ENCODE measurements at regions of chr20 and their contacts with region 1.

Region 1: DNA sequence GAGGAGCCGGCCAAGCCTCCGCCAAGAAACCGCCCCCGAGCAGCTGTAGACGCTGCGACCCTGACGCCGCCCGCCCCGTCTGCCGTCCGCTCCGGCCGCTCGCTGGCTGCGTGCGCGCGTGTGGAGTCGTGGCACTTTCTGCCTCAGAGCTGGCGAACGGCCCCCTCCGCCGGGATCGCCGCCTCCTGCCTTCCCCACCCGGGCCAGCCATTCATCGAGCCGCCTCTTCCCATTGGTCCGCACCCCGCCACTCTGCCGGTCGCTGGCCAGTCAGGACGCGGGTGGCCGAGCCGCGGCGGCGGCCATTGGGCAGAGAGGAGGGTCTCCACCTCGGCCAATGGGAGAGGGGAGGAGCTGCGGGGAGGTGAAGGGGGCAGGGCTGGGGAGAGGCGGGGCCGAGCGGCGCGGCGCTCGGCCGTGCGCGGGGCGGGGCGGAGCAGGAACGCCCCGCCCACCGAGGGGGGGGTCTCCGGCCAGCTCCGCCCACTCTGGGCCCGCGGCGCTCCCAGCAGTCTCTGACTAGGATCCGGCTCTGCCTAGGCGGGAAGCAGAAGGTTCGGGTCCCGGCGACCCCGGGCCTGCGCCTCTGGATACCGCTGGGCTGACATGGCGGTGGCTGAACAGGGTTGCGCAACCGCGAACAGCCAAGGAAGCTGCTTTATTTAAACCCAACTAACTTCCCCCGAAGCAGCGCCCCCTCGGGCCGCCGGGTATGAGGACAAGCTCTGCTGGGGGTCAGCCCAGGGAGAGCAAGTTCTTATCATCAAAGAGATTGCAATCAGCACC is at the start of gene RRBP1:
- DNase-seq: peak; percentile 99
- H3K4me3 ChIP-seq: peak within 1 kb of the TSS; percentile 78 to 88 (median 85)
- H3K27ac ChIP-seq: peak within 1 kb of the TSS; percentile 67
- H3K4me1 ChIP-seq: peaks cover 11% of the 10 kb centered on the region
- H3K27me3 ChIP-seq: no peaks in the 10 kb centered on the region
- CTCF ChIP-seq: peak; percentile 45 to 68
- total RNA-seq, gene RRBP1: 85.2 to 230 TPM

Region 2: DNA sequence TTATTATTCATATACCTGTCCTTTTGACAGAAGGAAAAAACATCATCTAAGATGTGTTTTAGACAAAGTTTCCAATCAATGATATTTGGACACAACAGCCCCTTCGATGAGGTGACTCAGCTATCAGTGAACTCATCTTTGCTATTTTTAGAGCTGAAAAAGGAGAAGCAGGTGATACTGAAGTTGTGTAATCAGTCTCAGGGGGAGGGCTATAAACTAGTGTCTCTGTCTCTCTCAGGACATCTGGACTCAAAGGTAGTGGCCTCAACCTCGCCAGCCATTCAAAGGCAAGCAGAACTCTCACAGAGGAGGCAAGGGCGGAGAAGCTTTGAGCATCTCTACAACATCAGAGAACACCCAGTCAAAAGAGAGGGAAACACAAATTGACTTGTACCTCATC is 286.6 kb before region 1 on chr20:
- CTCF ChIA-PET with region 1: no interaction called
- dilution Hi-C with region 1: no loop called
- in situ Hi-C with region 1: no loop called
- intact Hi-C with region 1: no loop called
- DNase-seq: no peak
- H3K4me3 ChIP-seq: no peak overlapping the region
- H3K27ac ChIP-seq: no peak overlapping the region
- H3K4me1 ChIP-seq: no peaks in the 10 kb centered on the region
- H3K27me3 ChIP-seq: no peaks in the 10 kb centered on the region
- CTCF ChIP-seq: no peak

Region 3: DNA sequence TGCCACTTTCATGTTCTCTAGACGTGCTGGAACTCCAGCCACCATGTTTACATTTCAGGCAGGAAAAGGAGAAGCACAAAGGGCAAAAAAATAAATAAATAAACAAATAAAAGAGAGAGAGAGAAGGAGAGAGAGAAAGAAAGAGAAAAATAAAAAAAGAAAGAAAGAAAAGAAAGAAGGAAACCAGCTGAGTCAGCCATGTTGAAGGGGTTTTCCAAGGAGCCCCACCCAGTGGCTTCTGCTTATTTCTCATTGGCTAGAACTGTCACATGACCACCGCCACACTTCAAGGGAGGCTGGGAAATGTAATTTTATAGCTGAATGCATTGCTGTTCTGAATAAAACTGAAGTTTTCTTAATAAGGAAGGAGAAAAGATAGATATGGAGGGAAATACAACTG is 222.2 kb before region 1 on chr20:
- CTCF ChIA-PET with region 1: no interaction called
- dilution Hi-C with region 1: no loop called
- in situ Hi-C with region 1: no loop called
- intact Hi-C with region 1: no loop called
- DNase-seq: no peak
- H3K4me3 ChIP-seq: no peak overlapping the region
- H3K27ac ChIP-seq: no peak overlapping the region
- H3K4me1 ChIP-seq: no peaks in the 10 kb centered on the region
- H3K27me3 ChIP-seq: no peaks in the 10 kb centered on the region
- CTCF ChIP-seq: no peak

Region 4: GRCh38 chr20:17741220-17741619 is 58.9 kb after region 1 on chr20:
- CTCF ChIA-PET with region 1: no interaction called
- dilution Hi-C with region 1: no loop called
- in situ Hi-C with region 1: no loop called
- intact Hi-C with region 1: no loop called
- DNase-seq: no peak
- H3K4me3 ChIP-seq: no peak overlapping the region
- H3K27ac ChIP-seq: no peak overlapping the region
- H3K4me1 ChIP-seq: no peaks in the 10 kb centered on the region
- H3K27me3 ChIP-seq: no peaks in the 10 kb centered on the region
- CTCF ChIP-seq: no peak

Region 5: DNA sequence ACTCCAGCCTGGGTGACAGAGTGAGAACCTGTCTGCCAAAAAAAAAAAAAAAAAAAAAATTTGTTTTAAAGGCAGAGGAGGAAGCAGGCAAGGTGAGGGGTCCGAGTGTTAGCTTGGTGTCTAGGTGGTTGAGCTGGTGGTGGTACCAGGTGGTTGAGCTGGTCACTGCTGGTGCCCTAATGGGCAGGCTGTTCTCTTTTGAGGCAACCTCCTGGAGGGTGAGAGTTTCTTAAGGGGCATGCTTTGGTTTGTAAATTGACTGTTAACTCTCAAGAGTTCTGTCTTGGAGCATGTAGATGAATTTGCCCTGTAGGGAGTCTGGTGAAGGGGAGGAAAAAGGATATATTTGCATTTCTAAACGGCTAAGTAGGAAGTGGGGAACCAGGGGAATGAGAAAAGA is 70.2 kb after region 1 on chr20:
- CTCF ChIA-PET with region 1: interaction called, 49 read pairs
- dilution Hi-C with region 1: no loop called
- in situ Hi-C with region 1: no loop called
- intact Hi-C with region 1: no loop called
- DNase-seq: no peak
- H3K4me3 ChIP-seq: no peak overlapping the region
- H3K27ac ChIP-seq: no peak overlapping the region
- H3K4me1 ChIP-seq: peaks cover 4% of the 10 kb centered on the region
- H3K27me3 ChIP-seq: no peaks in the 10 kb centered on the region
- CTCF ChIP-seq: no peak

Region 6: DNA sequence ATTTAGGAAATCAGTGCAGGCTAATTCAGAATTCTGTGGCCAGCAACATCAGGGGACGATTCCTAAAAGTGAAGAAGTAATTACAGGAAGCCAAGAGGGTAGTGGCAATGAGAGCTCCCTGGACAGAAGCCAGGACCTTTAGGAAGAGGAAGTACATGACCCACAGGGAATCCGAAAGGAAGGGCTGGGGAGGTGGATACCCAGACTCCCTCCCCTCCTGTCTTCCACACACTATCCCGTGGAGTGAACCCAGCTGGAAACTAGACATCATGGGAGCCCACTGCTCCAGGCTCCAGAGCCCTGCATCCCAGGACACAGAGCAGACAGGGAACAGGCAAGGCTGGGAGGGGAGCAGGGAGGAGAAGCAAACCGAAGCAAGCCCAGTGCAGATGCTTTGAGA is 203.2 kb after region 1 on chr20:
- CTCF ChIA-PET with region 1: no interaction called
- dilution Hi-C with region 1: loop called (anchors 5 kb)
- in situ Hi-C with region 1: loop called in 1 of 2 experiments (anchors 25 kb)
- intact Hi-C with region 1: loop called (anchors 2 kb)
- DNase-seq: no peak
- H3K4me3 ChIP-seq: no peak overlapping the region
- H3K27ac ChIP-seq: no peak overlapping the region
- H3K4me1 ChIP-seq: peaks cover 31% of the 10 kb centered on the region
- H3K27me3 ChIP-seq: no peaks in the 10 kb centered on the region
- CTCF ChIP-seq: no peak

Region 7: DNA sequence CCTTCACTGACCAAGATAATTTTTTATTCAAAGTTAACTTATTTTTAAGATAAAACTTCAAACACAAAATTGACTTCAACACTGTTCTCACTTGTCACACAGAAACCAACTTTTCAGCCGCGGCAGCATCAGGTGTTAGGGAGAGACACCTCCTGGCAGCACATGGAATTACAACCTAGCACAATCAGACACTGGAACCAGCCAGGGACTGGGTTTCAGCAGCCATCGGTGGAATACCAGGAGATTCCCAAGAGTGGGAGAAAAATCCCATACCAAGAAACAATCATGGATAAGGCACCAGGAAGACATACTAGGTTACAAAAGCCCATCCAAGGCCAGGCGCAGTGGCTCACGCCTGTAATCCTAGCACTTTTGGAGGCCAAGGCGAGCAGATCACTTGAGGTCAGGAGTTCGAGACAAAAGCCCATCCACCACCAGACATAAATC is 216.3 kb after region 1 on chr20:
- CTCF ChIA-PET with region 1: interaction called, 4 read pairs
- dilution Hi-C with region 1: loop called (anchors 5 kb)
- in situ Hi-C with region 1: loop called (anchors 5 to 25 kb)
- intact Hi-C with region 1: loop called (anchors 1 kb)
- DNase-seq: peak; percentile 53
- H3K4me3 ChIP-seq: no peak overlapping the region
- H3K27ac ChIP-seq: no peak overlapping the region
- H3K4me1 ChIP-seq: peaks cover 34% of the 10 kb centered on the region
- H3K27me3 ChIP-seq: no peaks in the 10 kb centered on the region
- CTCF ChIP-seq: peak; percentile 85 to 96

Region 8: DNA sequence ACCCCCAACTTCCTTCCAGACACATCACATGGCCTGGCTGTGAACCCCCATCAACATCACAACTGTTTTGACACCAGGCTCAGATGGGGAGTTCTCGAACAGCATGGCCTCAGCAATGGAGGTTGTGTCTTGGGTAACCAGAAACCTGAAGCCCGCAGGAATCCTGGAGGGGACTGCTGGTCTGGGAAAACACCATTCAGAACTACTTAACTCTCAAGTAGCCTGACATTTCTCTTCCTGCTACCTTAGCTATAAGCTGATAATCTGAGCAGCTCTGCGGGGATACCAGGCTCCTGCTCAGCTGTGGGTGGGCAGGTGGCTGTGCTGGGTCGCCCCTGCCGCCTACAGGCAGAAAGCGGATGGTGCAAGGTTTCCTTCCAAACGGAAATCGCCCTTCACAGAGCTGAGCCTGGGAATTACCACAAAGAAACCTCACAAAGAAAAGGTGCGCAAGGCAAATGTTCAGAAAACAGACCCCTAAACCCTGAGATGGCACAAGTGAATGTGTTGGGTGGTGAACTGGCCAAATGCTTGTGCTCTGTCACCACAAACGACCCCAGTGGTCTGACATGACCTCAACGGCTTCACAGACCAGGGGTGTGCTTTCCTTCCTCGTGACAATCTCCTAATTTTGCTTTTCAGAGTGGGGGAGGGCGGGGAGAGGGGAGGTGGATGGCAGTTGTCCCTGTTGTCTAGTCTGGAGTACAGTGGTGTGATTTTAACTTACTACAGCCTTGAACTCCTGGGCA is 256.7 kb after region 1 on chr20:
- CTCF ChIA-PET with region 1: interaction called, 7 read pairs
- dilution Hi-C with region 1: no loop called
- in situ Hi-C with region 1: no loop called
- intact Hi-C with region 1: loop called (anchors 2 kb)
- DNase-seq: peak; percentile 29
- H3K4me3 ChIP-seq: no peak overlapping the region
- H3K27ac ChIP-seq: no peak overlapping the region
- H3K4me1 ChIP-seq: no peaks in the 10 kb centered on the region
- H3K27me3 ChIP-seq: no peaks in the 10 kb centered on the region
- CTCF ChIP-seq: peak; percentile 82 to 83

Measured in mammary epithelial cell (primary cell).